ENCODE measurements at regions of chr3 and their contacts with region 1.

Region 1: DNA sequence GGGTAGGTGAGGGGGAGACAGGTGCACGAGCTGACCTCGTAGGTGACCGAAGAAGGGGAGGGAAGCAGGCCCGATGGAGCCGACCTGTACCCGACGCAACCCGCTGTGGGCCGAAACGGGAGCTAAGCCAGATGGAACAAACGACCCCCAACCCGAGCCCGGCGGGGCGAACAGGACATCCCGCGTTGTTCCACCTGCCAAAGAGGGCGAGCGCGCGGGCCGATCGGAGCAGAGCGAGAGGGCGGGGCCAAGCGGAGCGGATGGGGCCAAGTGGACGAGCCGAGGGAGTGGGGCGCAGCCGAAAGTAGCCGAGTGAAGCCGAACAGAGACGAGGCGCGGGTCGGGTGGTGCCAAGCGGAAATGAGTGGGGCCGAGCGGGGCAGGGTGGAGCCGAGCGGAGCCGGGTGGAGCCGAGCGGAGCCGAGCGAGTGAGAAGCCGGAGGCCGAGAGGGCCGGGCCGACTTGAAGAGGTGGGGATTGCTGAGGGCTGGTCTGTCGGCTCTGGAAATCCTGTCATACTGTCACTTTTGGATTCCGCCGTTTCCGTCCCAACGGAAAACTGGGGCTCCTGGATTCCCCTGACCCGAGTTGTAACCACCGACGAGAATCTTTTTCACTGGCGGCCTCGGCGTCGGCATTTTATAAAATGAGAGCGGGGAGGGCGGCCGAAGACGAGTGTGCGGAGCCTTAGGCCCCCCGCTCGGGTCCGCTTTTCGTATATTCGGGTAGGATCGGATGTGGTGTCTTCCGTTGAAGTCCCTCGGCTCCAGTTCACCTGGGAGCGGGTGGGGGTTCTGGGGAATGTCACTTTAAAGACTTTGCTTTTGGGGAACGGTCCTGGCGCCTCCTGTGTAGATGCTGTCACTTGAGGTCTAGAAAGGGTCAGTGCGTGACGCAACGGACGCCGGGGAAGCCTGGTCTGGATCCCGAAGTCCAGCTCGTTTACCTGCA is 15.6 kb upstream of the WNT7A start:
- DNase-seq: peak; percentile 75 to 95
- H3K4me3 ChIP-seq: peak overlapping the region; percentile 96
- H3K27ac ChIP-seq: no peak overlapping the region
- H3K4me1 ChIP-seq: peaks cover 17% of the 10 kb centered on the region
- H3K27me3 ChIP-seq: no peaks in the 10 kb centered on the region
- CTCF ChIP-seq: no peak

Region 2: GRCh38 chr3:13932578-13933295 is 37.3 kb after region 1 on chr3:
- CTCF ChIA-PET with region 1: no interaction called
- POLR2A ChIA-PET with region 1: no interaction called
- intact Hi-C with region 1: no loop called
- DNase-seq: no peak
- H3K4me3 ChIP-seq: no peak overlapping the region
- H3K27ac ChIP-seq: no peak overlapping the region
- H3K4me1 ChIP-seq: no peaks in the 10 kb centered on the region
- H3K27me3 ChIP-seq: peaks cover 47% of the 10 kb centered on the region
- CTCF ChIP-seq: no peak

Region 3: DNA sequence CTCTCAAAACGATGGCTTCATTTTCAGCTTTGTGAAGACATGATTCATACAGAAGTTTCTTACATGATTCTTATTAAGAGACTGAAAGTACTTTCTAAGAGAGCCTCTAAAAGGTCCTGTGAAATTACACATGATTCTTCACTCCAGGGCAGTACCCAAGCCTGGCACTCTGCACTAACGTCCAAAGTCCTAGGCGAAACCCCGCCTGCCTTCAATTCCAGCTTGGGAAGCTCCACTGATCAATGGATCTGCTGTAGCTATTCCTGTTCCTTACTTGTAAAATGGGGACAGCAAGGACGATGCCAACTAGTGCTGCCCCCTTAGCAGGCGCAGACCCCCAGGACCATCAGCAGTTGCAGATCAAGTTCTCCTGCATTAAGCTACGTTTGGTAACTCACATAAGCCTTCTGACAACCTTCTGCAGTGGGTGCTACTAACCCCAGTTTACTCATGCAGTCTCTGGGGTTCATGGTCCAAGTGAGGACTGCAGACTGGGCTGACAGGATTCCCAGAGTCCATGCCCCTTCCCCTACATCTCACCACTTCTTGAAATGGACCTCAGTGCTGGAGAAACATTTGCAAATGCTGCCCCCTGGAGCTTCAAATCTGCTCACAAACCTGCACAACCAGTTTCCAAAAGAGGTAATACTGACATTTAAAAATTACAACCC is 218.7 kb after region 1 on chr3:
- CTCF ChIA-PET with region 1: interaction called, 27 read pairs
- POLR2A ChIA-PET with region 1: interaction called, 3 read pairs
- intact Hi-C with region 1: loop called (anchors 1 kb)
- DNase-seq: peak in 1 of 2 experiments; percentile 42
- H3K4me3 ChIP-seq: no peak overlapping the region
- H3K27ac ChIP-seq: no peak overlapping the region
- H3K4me1 ChIP-seq: peaks cover 9% of the 10 kb centered on the region
- H3K27me3 ChIP-seq: no peaks in the 10 kb centered on the region
- CTCF ChIP-seq: peak; percentile 62

Region 4: GRCh38 chr3:14178247-14179113 is 283.1 kb after region 1 on chr3 and contains the starts of genes LSM3 and XPC:
- CTCF ChIA-PET with region 1: interaction called, 4 read pairs
- POLR2A ChIA-PET with region 1: no interaction called
- intact Hi-C with region 1: loop called (anchors 5 kb)
- DNase-seq: peak; percentile 90 to 97
- H3K4me3 ChIP-seq: peak within 1 kb of the TSS; percentile 69
- H3K27ac ChIP-seq: peak within 1 kb of the TSS; percentile 47
- H3K4me1 ChIP-seq: peaks cover 19% of the 10 kb centered on the region
- H3K27me3 ChIP-seq: no peaks in the 10 kb centered on the region
- CTCF ChIP-seq: no peak
- total RNA-seq, gene LSM3: 8.7 and 18.3 TPM in 2 replicates
- total RNA-seq, gene XPC: 27.1 and 28.8 TPM in 2 replicates

Region 5: GRCh38 chr3:14651440-14652251 is 756.2 kb after region 1 on chr3 and contains the start of gene CCDC174:
- CTCF ChIA-PET with region 1: no interaction called
- POLR2A ChIA-PET with region 1: interaction called, 11 read pairs
- intact Hi-C with region 1: no loop called
- DNase-seq: peak; percentile 91 to 94
- H3K4me3 ChIP-seq: peak within 1 kb of the TSS; percentile 95
- H3K27ac ChIP-seq: peak within 1 kb of the TSS; percentile 82
- H3K4me1 ChIP-seq: peaks cover 19% of the 10 kb centered on the region
- H3K27me3 ChIP-seq: no peaks in the 10 kb centered on the region
- CTCF ChIP-seq: no peak
- total RNA-seq, gene CCDC174: 14.7 and 14.9 TPM in 2 replicates

Region 6: DNA sequence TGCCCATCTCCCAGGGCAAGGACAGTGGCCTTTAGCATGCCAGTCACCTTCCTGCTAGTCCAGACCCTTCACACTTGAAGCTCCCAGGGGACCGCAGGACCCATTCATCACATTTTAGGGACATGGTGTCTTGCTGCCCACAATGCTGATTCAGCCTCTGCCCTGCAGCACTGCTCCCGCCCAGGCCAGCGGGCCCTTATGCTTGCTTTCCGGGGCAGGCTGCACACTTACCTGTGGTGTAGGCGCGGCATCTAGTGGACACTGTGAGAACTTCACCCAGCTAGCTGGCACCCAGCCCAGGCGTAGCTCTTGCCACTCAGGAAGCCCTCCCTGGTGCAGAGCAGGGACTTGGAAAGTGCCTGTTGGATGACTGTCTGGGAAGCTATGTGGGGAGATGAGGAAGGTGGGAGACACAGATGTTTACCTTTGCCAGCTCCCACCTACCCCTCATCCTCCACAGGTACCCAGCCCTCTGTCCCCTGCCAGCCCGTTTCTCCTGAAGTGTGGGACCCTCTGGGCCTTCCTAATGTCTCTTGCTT is 1025.7 kb after region 1 on chr3:
- CTCF ChIA-PET with region 1: no interaction called
- POLR2A ChIA-PET with region 1: no interaction called
- intact Hi-C with region 1: loop called (anchors 2 kb)
- DNase-seq: peak; percentile 68 to 83
- H3K4me3 ChIP-seq: no peak overlapping the region
- H3K27ac ChIP-seq: no peak overlapping the region
- H3K4me1 ChIP-seq: no peaks in the 10 kb centered on the region
- H3K27me3 ChIP-seq: no peaks in the 10 kb centered on the region
- CTCF ChIP-seq: peak; percentile 98

Measured in PC-9 (cell line).